Colonic mucosa (tissue), 4 donors: ENCODE measurements at regions of chr19 and their contacts with region 1.

Region 1: DNA sequence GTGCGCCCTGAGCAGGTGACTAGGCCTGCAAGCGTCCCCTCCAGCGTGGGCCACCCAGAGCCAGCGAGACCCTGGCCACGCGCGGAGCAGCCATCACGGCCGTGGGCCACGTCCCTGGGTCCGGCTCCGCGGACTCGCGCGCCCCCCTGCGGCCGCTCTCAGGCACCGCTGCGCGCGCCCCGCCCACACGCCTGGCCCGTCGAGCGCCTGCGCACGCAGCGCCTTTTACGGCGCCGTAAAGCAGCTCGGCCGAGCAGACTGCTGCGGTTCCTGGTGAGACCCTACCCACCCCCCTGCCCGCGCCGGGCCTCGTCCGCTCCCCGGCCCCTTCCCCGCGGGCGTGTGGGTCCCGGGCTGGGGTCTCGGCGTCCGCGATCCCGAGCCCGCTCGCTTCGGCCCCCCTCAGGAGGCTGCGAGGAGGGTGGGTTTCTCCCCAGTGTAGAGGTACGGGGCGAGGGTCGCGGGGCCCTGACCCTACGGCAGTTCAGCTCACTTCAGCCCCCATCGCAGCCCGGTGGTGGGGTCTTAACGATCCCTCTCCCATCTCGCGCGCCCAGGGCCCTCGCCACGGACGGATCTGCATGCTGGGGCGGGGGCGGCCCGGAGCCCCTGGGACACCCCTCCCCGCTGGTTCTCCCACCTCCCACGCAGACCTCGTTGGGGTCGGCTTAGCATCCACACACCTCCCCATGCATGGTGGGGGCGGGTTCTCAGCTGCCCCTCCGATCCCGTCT is at the start of gene TRAPPC5:
- DNase-seq: peak; percentile 87
- H3K4me3 ChIP-seq: peak within 1 kb of the TSS; percentile 83
- H3K27ac ChIP-seq: peak within 1 kb of the TSS; percentile 82
- H3K4me1 ChIP-seq: no peaks in the 10 kb centered on the region
- H3K27me3 ChIP-seq: no peaks in the 10 kb centered on the region
- CTCF ChIP-seq: peak; percentile 95
- total RNA-seq, gene TRAPPC5: 107 to 139 TPM

Region 2: DNA sequence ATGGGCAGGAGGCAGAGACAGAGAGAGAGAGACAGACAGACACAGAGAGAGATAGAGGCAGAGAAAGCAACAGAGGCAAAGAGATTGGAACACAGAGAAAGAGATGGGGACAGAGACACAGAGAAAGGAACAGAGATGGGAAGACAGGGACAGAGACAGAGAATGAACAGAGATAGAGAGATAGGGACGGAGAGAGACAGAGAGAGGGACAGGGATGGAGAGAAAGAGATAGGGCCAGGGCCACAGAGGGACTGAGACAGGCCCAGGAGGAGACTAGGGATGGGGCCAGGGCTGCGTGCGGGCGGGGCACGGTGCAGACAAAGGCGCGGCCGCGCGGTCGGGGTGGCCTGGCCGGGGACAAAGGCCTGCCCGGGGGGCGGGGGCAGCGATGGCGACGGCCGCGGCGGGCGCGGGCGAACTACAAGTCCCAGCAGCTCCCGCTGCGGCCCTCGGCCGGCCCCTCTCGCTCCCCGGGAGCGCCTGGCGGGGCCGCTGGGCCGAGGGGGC is 165.1 kb before region 1 on chr19 and contains the start of gene ZNF358:
- intact Hi-C with region 1: no loop called
- DNase-seq: peak; percentile 79
- H3K4me3 ChIP-seq: peak within 1 kb of the TSS; percentile 67
- H3K27ac ChIP-seq: peak within 1 kb of the TSS; percentile 76
- H3K4me1 ChIP-seq: no peaks in the 10 kb centered on the region
- H3K27me3 ChIP-seq: no peaks in the 10 kb centered on the region
- CTCF ChIP-seq: no peak
- total RNA-seq, gene ZNF358: 20.2 to 44.1 TPM

Region 3: DNA sequence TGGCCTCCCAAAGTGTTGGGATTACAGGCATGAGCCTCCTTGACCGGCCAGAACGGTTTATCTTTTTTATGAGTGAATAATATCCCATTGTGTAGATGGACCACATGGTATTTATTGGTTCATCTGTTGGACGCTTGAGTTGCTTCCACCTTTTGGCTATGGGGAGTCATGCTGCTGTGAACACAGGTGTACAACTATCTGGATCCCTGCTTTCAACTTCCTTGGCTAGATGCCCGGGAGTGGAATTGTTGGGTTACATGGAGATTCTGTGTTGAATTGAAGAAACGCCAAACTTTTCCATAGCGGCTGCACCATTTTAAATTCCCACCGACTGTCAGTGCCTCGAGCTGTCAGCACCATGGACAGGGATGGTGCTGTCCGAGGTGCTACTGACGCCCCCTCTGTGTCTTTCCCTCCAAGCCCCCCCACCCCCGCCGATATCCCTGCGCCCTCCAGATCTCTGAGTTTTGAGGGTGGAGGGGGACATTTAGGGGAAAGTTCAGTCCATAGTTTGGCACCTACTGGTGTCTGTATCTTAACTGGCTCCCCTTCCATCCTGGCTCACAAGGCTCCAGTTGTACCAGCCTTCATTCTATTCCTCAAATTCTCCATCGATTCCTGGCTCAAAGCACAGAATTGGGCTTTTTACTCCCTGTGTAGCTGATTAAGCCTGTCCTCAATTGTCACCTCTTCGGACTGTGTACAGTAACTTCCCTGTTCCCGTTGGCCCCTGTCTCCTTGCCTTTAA is 118.0 kb before region 1 on chr19:
- intact Hi-C with region 1: loop called (anchors 2 kb)
- DNase-seq: no peak
- H3K4me3 ChIP-seq: no peak overlapping the region
- H3K27ac ChIP-seq: no peak overlapping the region
- H3K4me1 ChIP-seq: no peaks in the 10 kb centered on the region
- H3K27me3 ChIP-seq: no peaks in the 10 kb centered on the region
- CTCF ChIP-seq: no peak